Endothelial cell of umbilical vein (primary cell): ENCODE measurements at regions of chr1 and their contacts with region 1.

Region 1: GRCh38 chr1:10065344-10065685 is 32.6 kb downstream of the UBE4B start:
- DNase-seq: peak; percentile 30
- H3K4me3 ChIP-seq: no peak overlapping the region
- H3K27ac ChIP-seq: no peak overlapping the region
- H3K4me1 ChIP-seq: peaks cover 26% of the 10 kb centered on the region
- H3K27me3 ChIP-seq: no peaks in the 10 kb centered on the region
- CTCF ChIP-seq: no peak
- POLR2A ChIP-seq: no peak

Region 2: GRCh38 chr1:10108134-10108663 is 42.9 kb after region 1 on chr1:
- CTCF ChIA-PET with region 1: no interaction called
- POLR2A ChIA-PET with region 1: no interaction called
- dilution Hi-C with region 1: no loop called
- intact Hi-C with region 1: loop called (anchors 1 kb)
- DNase-seq: peak; percentile 83
- H3K4me3 ChIP-seq: peak overlapping the region in 1 of 3 experiments; percentile 41
- H3K27ac ChIP-seq: peak overlapping the region; percentile 92
- H3K4me1 ChIP-seq: peaks cover 23% of the 10 kb centered on the region
- H3K27me3 ChIP-seq: no peaks in the 10 kb centered on the region
- CTCF ChIP-seq: no peak
- POLR2A ChIP-seq: no peak